Left cardiac atrium (tissue), 4 donors: ENCODE measurements at regions of chr1 and their contacts with region 1.

Region 1: GRCh38 chr1:167263819-167264464 is 43.3 kb downstream of the POU2F1 start:
- DNase-seq: no peak
- ATAC-seq: peak in 1 of 2 donors; percentile 17

Region 2: GRCh38 chr1:167442124-167442848 is 178.3 kb after region 1 on chr1:
- intact Hi-C with region 1: loop called (anchors 2 to 5 kb)
- DNase-seq: peak; percentile 90
- ATAC-seq: peak; percentile 93 to 96

Region 3: GRCh38 chr1:167447521-167448136 is 183.7 kb after region 1 on chr1:
- intact Hi-C with region 1: loop called (anchors 2 to 5 kb)
- DNase-seq: no peak
- ATAC-seq: peak; percentile 51 to 71